GM10248 (cell line): ENCODE measurements at regions of chr17 and their contacts with region 1.

Region 1: DNA sequence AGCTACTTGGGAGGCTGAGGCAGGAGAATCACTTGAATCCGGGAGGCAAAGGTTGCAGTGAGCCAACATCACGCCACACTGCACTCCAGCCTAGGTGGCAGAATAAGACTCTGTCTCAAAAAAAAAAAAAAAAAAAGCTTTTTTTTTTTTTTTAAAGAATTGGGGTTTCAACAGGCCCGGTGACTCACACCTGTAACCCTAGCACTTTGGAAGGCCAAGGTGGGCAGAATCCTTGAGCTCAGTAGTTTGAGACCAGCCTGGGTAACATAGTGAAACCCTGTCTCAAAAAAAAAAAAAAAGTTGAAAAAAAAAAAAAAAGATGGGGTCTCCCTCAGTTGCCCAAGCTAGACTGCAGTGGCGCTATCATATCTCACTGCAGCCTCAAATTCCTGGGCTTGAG is 6.6 kb upstream of the HEXIM2 start:
- DNase-seq: no peak
- CTCF ChIP-seq: no peak

Region 2: GRCh38 chr17:45021607-45022287 is 133.3 kb before region 1 on chr17:
- CTCF ChIA-PET with region 1: no interaction called
- POLR2A ChIA-PET with region 1: no interaction called
- DNase-seq: peak; percentile 91
- CTCF ChIP-seq: peak; percentile 79

Region 3: DNA sequence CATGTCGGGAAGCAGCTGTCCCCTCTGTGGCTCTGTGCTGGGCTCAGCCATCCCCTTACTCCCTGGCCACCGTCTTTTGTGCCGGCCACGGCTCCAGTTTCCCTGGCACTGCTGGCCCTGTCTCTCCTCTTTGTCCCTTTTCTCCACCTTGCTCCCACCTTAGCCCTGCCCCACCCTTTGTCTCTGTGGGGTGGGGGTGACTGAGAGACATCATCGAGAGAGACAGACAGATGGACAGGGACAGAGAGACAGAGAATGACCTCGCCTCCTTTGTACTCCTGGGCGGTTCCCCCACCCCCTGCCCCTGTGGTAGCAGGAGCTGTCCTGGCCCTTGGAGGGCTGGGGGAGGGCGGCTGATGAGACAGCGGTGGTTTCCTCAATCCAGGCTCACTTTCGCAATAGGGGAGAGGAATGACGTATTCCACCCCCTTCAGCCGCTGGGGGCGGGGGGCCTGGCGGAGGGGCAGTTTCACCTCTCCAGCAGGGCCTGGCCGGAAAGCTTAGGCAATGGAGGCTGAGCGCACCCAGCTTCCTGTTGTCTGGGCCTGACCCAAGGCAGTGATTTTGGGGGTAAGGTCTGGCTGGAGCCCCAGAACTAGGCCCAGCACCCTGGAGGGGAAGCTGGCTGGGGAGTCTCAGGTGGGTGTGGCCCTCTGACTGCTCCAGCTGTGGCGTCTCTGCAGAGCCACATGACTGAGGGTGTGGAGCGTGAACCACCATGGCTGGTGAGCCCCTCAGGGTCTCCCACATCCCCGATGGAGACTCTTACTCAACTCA is 73.9 kb after region 1 on chr17:
- CTCF ChIA-PET with region 1: interaction called, 3 read pairs
- POLR2A ChIA-PET with region 1: interaction called, 31 read pairs
- DNase-seq: peak; percentile 86
- CTCF ChIP-seq: no peak